ENCODE measurements at regions of chr9 and their contacts with region 1.

Region 1: GRCh38 chr9:128771745-128772519 is at the start of gene ZER1:
- DNase-seq: peak; percentile 94
- ATAC-seq: peak; percentile 95
- H3K4me3 Mint-ChIP-seq: peak within 1 kb of the TSS; percentile 94
- H3K27ac Mint-ChIP-seq: peak within 1 kb of the TSS; percentile 95
- H3K4me1 Mint-ChIP-seq: peaks cover 21% of the 10 kb centered on the region
- H3K27me3 Mint-ChIP-seq: no peaks in the 10 kb centered on the region
- total RNA-seq, gene ZER1: 15.3 to 15.9 TPM

Region 2: GRCh38 chr9:128787604-128788041 is 15.7 kb after region 1 on chr9:
- CTCF ChIA-PET with region 1: interaction called, 10 read pairs
- POLR2A ChIA-PET with region 1: interaction called, 10 read pairs
- DNase-seq: peak; percentile 28
- ATAC-seq: no peak
- H3K4me3 Mint-ChIP-seq: peak overlapping the region; percentile 95
- H3K27ac Mint-ChIP-seq: peak overlapping the region; percentile 89
- H3K4me1 Mint-ChIP-seq: peaks cover 21% of the 10 kb centered on the region
- H3K27me3 Mint-ChIP-seq: no peaks in the 10 kb centered on the region

Region 3: DNA sequence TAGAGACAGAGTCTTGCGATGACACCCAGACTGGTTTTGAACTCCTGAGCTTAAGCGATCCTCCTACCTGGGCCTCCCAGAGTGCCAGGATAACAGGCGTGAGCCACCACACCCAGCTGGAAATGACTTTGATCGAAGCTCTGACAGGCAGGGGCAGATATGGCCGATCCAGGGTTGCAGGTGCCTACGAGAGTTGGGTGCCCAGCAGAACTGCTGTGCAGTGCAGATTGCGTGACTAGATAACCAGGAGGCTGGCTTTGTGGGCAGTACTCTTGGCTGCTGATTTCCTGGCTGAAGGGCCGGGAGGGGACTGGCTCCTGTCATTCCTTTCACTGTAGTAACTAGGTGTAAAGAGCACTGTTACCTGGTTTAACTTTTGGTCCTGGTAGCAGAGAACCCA is 27.0 kb after region 1 on chr9:
- CTCF ChIA-PET with region 1: no interaction called
- POLR2A ChIA-PET with region 1: no interaction called
- DNase-seq: no peak
- ATAC-seq: no peak
- H3K4me3 Mint-ChIP-seq: no peak overlapping the region
- H3K27ac Mint-ChIP-seq: peak overlapping the region; percentile 43
- H3K4me1 Mint-ChIP-seq: no peaks in the 10 kb centered on the region
- H3K27me3 Mint-ChIP-seq: no peaks in the 10 kb centered on the region

Measured in activated CD8-positive, alpha-beta T cell treated with anti-CD3 and anti-CD28 coated beads, Interleukin-2, amount 10 ng/mL, durations not matched to agents 7 days and 5 days (primary cell).